H1 (cell line): ENCODE measurements at regions of chr12 and their contacts with region 1.

Region 1: GRCh38 chr12:78146365-78146772 is 315.7 kb downstream of the NAV3 start:
- DNase-seq: no peak
- H3K4me3 ChIP-seq: no peak overlapping the region
- H3K27ac ChIP-seq: no peak overlapping the region
- H3K4me1 ChIP-seq: peaks cover 0 to 3% (median 2%) of the 10 kb centered on the region in 4 experiments; a peak in 2 of 7 replicates
- H3K27me3 ChIP-seq: no peaks in the 10 kb centered on the region
- CTCF ChIP-seq: peak in 2 of 3 experiments; percentile 37 to 56; a peak in 2 of 4 replicates
- EP300 ChIP-seq: no peak
- POLR2A ChIP-seq: no peak
- RAD21 ChIP-seq: peak; percentile 65 to 69

Region 2: DNA sequence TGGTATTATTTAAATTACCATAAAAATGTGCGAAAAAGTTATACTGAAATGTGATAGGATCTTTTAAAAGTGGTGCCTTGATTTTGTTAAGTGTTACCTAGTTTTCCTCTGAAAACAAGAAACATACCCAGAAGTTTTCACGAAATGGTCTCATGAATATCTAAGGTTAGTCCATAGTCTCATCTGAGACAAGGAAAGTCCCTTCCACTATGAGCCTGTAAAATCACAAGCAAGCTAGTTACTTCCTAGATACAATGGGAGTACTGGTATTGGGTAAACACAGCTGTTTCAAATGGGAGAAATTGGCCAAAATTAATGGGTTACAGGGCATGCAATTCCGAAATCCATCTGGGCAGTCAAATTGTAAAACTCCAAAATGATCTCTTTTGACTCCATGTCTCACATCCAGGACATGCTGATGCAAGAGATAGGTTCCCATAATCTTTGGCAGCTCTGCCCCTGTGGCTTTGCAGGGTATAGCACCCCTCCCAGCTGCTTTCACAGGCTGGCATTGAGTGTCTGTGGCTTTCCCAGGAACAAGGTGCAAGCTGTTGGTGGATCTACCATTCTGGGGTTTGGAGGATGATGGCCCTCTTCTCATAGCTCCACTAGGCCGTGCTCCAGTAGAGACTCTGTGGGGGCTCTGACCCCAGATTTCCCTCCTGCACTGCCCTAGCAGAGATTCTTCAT is 44.3 kb before region 1 on chr12:
- CTCF ChIA-PET with region 1: no interaction called
- POLR2A ChIA-PET with region 1: no interaction called
- DNase-seq: no peak
- H3K4me3 ChIP-seq: no peak overlapping the region
- H3K27ac ChIP-seq: no peak overlapping the region
- H3K4me1 ChIP-seq: no peaks in the 10 kb centered on the region
- H3K27me3 ChIP-seq: no peaks in the 10 kb centered on the region
- CTCF ChIP-seq: peak in 2 of 3 experiments; percentile 5 to 15; a peak in 2 of 4 replicates
- EP300 ChIP-seq: no peak
- POLR2A ChIP-seq: no peak
- RAD21 ChIP-seq: no peak; a peak in 1 of 4 replicates

Region 3: GRCh38 chr12:78128211-78128610 is 18.2 kb before region 1 on chr12:
- CTCF ChIA-PET with region 1: interaction called, 12 read pairs
- POLR2A ChIA-PET with region 1: no interaction called
- DNase-seq: no peak
- H3K4me3 ChIP-seq: no peak overlapping the region
- H3K27ac ChIP-seq: no peak overlapping the region
- H3K4me1 ChIP-seq: peaks cover 0 to 4% (median 0%) of the 10 kb centered on the region in 4 experiments; a peak in 2 of 7 replicates
- H3K27me3 ChIP-seq: no peaks in the 10 kb centered on the region
- CTCF ChIP-seq: no peak
- EP300 ChIP-seq: no peak
- POLR2A ChIP-seq: no peak
- RAD21 ChIP-seq: no peak

Region 4: DNA sequence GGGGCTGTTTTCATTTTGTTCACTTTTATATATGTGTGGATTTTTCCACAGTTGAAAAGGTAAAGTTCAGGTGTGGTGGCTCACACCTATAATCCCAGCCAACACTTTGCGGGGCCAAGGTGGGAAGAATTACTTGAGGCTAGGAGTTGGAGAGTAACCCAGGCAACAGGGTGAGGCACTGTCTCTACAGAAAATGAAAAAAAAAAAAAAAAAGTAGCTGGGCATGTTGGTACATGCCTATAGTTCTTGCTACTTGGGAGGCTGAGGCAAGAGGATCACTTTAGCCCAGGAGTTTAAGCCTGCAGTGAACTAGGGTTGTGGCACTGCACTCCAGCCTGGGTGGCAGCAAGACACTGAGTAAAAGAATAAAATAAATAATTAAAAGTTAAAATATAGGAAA is 10.8 kb after region 1 on chr12:
- CTCF ChIA-PET with region 1: interaction called, 12 read pairs
- POLR2A ChIA-PET with region 1: no interaction called
- DNase-seq: no peak
- H3K4me3 ChIP-seq: no peak overlapping the region
- H3K27ac ChIP-seq: no peak overlapping the region
- H3K4me1 ChIP-seq: no peaks in the 10 kb centered on the region; a peak in 1 of 7 replicates
- H3K27me3 ChIP-seq: no peaks in the 10 kb centered on the region
- CTCF ChIP-seq: no peak
- EP300 ChIP-seq: no peak
- POLR2A ChIP-seq: no peak
- RAD21 ChIP-seq: no peak

Region 5: DNA sequence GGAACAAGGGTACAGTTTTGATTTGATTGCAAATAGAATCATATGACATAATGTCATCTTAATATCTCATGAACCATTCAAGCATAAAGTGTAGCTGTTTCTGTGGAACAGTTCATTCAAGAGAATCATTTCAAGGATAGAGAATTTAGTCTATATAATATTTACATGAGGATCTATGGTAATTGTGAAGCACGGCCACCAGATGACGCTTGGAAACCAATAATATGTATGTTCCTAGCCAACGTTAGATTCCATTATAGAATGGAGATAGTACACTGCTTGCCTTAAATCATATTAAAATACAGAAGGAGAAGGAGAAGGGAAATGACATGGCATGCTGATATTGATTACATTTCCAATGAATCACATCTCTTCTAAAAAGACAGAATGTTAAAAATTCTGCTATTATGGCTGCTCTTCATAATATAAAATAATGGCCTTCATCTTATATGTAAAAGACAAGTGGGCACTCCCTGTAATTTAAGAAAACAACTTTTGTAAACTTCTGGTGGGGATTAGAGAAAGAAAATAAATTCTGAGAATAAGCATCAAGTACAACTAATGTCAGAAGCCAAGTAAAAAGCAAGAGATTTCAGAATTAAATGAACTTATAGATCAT is 35.3 kb after region 1 on chr12:
- CTCF ChIA-PET with region 1: no interaction called
- POLR2A ChIA-PET with region 1: no interaction called
- DNase-seq: no peak
- H3K4me3 ChIP-seq: no peak overlapping the region
- H3K27ac ChIP-seq: no peak overlapping the region
- H3K4me1 ChIP-seq: no peaks in the 10 kb centered on the region; a peak in 1 of 7 replicates
- H3K27me3 ChIP-seq: no peaks in the 10 kb centered on the region
- CTCF ChIP-seq: peak in 2 of 3 experiments; percentile 50 to 52; a peak in 2 of 4 replicates
- EP300 ChIP-seq: no peak
- POLR2A ChIP-seq: no peak
- RAD21 ChIP-seq: peak; percentile 91 to 96